Heart left ventricle (tissue), 16 donors: ENCODE measurements at regions of chr7 and their contacts with region 1.

Region 1: GRCh38 chr7:75914730-75915585 is at the start of gene POR:
- DNase-seq: peak; percentile 95 to 98 (median 96)
- ATAC-seq: peak; percentile 96 to 99 (median 99)
- H3K4me3 ChIP-seq: peak within 1 kb of the TSS; percentile 72 to 100 (median 93)
- H3K27ac ChIP-seq: peak within 1 kb of the TSS; percentile 76 to 96 (median 94)
- H3K4me1 ChIP-seq: peaks cover 0 to 49% (median 21%) of the 10 kb centered on the region in 12 donors
- H3K27me3 ChIP-seq: no peaks in the 10 kb centered on the region
- CTCF ChIP-seq: peak in 5 of 12 donors; percentile 20 to 46 (median 30)
- POLR2A ChIP-seq: peak; percentile 79 to 100
- total RNA-seq, gene POR: 38.3 to 202 (median 80.0) TPM

Region 2: GRCh38 chr7:75624134-75624832 is 290.7 kb before region 1 on chr7:
- intact Hi-C with region 1: no loop called
- DNase-seq: peak; percentile 38 to 77 (median 59)
- ATAC-seq: peak; percentile 29 to 89 (median 88)
- H3K4me3 ChIP-seq: peak overlapping the region in 1 of 12 donors; percentile 20
- H3K27ac ChIP-seq: peak overlapping the region in 11 of 12 donors; percentile 9 to 88 (median 39)
- H3K4me1 ChIP-seq: peaks cover 0 to 54% (median 19%) of the 10 kb centered on the region in 12 donors
- H3K27me3 ChIP-seq: no peaks in the 10 kb centered on the region
- CTCF ChIP-seq: no peak
- POLR2A ChIP-seq: no peak

Region 3: DNA sequence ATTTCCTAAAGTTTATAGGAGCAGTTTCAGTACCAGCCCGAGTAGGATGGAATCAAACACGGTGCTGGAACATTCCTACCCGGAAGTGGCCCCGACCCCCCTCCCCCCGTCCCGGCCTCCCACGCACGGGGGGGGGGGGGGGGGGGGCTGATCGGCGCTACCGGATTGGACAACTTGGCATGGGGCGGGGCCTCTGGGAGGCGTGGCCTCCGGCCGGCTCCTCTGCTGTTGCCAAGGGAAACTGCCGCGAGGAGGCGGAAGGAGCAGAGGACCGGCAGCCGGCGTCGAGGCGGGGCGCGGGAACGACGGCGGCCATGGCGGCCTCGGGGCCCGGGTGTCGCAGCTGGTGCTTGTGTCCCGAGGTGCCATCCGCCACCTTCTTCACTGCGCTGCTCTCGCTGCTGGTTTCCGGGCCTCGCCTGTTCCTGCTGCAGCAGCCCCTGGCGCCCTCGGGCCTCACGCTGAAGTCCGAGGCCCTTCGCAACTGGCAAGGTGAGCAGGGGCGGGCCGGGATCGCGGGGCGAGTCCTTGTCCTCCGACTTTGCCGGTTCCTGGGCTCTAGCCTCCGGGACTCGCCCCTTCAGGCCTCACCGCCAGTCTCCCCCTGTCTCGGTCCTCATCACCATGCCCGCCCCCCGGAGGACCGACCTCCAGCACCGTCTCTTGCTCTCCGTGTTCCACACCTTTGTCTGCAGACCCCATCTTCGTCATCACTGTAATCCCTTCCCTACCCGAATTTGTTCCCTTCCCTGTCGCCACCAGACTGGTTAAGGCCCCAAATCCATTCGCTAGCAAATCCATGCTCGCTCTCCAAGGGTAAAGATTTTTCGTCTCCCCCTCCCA is 36.0 kb before region 1 on chr7 and contains the start of gene RHBDD2:
- intact Hi-C with region 1: loop called in 4 of 10 experiments (anchors 2 to 5 kb)
- DNase-seq: peak; percentile 96 to 98 (median 97)
- ATAC-seq: peak; percentile 97 to 100 (median 99)
- H3K4me3 ChIP-seq: peak within 1 kb of the TSS; percentile 45 to 98 (median 88)
- H3K27ac ChIP-seq: peak within 1 kb of the TSS; percentile 11 to 89 (median 85)
- H3K4me1 ChIP-seq: peaks cover 0 to 43% (median 15%) of the 10 kb centered on the region in 12 donors
- H3K27me3 ChIP-seq: no peaks in the 10 kb centered on the region
- CTCF ChIP-seq: peak in 7 of 12 donors; percentile 3 to 50 (median 26)
- POLR2A ChIP-seq: peak; percentile 90 to 99
- total RNA-seq, gene RHBDD2: 23.6 to 44.1 (median 32.5) TPM

Region 4: DNA sequence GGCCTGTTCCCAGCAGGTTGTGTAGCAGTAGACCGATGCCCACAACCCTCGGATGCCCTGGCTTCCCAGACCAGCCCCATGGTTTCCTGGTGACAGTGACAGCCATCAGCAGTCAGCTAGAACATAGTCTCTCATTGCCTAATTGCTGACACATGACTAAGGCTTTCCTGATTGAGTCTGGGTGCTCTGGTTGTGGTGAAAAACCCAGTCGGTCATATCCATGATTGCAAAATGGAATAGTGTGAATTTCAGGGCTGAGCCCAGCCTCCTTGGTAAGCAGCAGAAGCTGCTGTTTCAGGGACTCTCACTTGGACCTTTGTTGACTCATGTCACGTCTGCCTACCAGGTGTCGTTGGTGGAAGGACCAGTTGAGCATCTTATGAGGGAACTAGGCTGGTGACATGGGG is 36.6 kb after region 1 on chr7:
- intact Hi-C with region 1: loop called in 2 of 10 experiments (anchors 2 to 5 kb)
- DNase-seq: peak in 3 of 5 donors; percentile 32 to 82 (median 57)
- ATAC-seq: peak; percentile 57 to 83 (median 81)
- H3K4me3 ChIP-seq: no peak overlapping the region
- H3K27ac ChIP-seq: peak overlapping the region in 11 of 12 donors; percentile 46 to 93 (median 75)
- H3K4me1 ChIP-seq: peaks cover 0 to 37% (median 19%) of the 10 kb centered on the region in 12 donors
- H3K27me3 ChIP-seq: no peaks in the 10 kb centered on the region
- CTCF ChIP-seq: no peak
- POLR2A ChIP-seq: no peak

Region 5: DNA sequence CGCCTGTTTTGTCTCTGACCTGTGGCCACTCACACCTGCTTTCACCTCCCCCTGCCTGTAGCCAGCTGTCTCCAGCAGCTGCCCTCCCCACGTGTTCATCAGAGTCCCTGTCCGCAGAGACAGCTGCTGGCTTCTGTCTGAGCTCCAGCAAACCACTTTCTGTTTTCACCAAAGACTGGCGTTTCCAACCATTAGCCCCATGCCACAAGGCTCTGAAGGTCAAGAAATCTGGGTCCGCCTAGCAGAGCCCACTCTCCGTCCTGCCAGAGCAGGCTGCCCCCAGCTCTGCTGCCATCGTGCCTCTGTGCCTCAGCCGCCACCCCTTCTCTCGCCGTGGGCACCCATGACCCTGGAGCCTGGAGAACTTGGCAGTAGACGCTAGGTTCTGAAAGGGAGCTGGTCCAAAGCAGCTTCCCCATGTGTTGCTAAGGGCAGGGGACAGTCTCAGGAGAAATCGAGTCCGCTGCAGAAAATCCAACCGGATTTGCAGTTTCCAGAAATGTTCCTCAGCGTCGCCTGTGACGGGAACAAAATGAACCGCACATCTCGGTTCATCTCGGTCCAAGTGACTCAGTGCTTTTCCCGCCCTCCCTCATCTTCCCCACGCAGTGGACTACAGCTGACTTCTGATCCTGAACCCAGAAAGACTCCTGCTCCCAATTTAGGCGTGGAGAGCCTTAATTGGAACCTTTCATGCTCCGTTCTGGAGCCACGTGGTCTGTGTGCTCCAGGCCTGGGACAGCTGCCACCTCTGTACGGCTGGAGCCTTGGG is 51.4 kb after region 1 on chr7:
- intact Hi-C with region 1: loop called in 6 of 10 experiments (anchors 2 to 10 kb)
- DNase-seq: peak in 4 of 5 donors; percentile 66 to 77 (median 74)
- ATAC-seq: peak; percentile 59 to 64 (median 61)
- H3K4me3 ChIP-seq: peak overlapping the region in 5 of 12 donors; percentile 7 to 20 (median 18)
- H3K27ac ChIP-seq: peak overlapping the region; percentile 74 to 93 (median 83)
- H3K4me1 ChIP-seq: peaks cover 14 to 83% (median 70%) of the 10 kb centered on the region in 12 donors
- H3K27me3 ChIP-seq: no peaks in the 10 kb centered on the region
- CTCF ChIP-seq: no peak
- POLR2A ChIP-seq: no peak

Region 6: DNA sequence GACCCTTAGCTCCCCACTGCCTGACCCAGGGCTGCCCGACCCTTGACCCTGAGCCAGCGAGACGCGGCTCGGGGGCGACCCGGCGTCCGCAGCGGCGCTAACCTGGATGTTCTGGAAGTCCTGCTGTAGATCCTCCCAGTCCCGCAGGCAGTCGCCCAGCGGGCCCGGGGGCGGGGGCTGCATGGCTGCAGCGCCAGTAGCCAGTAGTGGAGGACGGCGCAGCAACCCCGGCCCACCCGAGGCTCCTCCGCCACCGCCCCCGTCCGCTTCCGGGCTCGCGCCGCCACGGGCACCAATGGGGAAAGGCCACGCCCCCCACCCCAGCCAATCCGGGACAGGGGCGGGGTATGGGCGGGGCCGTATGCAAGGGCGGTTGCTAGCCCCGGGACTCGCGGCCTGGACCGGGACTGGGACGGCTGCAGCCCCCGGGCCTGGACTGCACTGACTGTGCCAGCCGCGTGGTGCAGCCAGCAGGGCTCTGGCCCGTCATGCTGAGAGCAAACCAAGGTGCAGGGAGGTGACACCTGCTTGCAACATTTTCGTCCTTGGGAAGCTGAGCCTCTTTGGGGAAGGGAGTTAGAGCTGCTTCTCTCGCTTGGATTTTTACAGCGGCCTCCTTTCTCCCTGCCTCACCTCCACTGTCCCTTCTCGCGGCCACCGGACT is 79.6 kb after region 1 on chr7 and contains the start of gene TMEM120A:
- intact Hi-C with region 1: loop called in 7 of 10 experiments (anchors 2 to 10 kb)
- DNase-seq: peak; percentile 98 to 99 (median 98)
- ATAC-seq: peak; percentile 89 to 93 (median 90)
- H3K4me3 ChIP-seq: peak within 1 kb of the TSS; percentile 60 to 97 (median 82)
- H3K27ac ChIP-seq: peak within 1 kb of the TSS; percentile 91 to 100 (median 96)
- H3K4me1 ChIP-seq: peaks cover 6 to 50% (median 36%) of the 10 kb centered on the region in 12 donors
- H3K27me3 ChIP-seq: no peaks in the 10 kb centered on the region
- CTCF ChIP-seq: peak in 9 of 12 donors; percentile 12 to 53 (median 32)
- POLR2A ChIP-seq: peak; percentile 46 to 95
- total RNA-seq, gene TMEM120A: 63.8 to 181 (median 125) TPM

Region 7: DNA sequence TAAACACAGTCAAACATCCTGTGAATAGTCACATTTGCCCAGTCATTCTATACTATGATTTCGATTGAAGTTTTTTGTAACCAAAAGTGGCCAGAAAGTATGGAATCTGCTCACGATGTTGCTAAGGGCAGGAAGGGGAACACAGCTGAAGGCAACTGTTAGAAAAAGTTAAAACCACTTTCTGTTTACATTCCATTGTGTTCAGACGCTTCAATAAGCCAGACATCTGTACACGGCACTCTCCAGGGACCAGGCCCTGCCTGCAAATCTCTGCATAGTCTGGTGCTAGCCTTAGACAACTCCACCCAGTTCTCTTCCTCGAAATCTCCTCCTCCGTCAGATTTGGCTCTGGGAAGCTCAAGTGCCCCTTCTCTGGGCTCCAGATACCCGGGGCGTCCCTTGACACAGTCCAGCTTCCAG is 96.5 kb after region 1 on chr7:
- intact Hi-C with region 1: loop called in 1 of 10 experiments (anchors 5 kb)
- DNase-seq: peak; percentile 64 to 85 (median 81)
- ATAC-seq: peak; percentile 90 to 96 (median 94)
- H3K4me3 ChIP-seq: peak overlapping the region in 2 of 12 donors; percentile 10 to 11
- H3K27ac ChIP-seq: peak overlapping the region; percentile 3 to 79 (median 70)
- H3K4me1 ChIP-seq: peaks cover 0 to 38% (median 21%) of the 10 kb centered on the region in 12 donors
- H3K27me3 ChIP-seq: no peaks in the 10 kb centered on the region
- CTCF ChIP-seq: no peak
- POLR2A ChIP-seq: no peak